IMR-90 (cell line): ENCODE measurements at regions of chr3 and their contacts with region 1.

Region 1: DNA sequence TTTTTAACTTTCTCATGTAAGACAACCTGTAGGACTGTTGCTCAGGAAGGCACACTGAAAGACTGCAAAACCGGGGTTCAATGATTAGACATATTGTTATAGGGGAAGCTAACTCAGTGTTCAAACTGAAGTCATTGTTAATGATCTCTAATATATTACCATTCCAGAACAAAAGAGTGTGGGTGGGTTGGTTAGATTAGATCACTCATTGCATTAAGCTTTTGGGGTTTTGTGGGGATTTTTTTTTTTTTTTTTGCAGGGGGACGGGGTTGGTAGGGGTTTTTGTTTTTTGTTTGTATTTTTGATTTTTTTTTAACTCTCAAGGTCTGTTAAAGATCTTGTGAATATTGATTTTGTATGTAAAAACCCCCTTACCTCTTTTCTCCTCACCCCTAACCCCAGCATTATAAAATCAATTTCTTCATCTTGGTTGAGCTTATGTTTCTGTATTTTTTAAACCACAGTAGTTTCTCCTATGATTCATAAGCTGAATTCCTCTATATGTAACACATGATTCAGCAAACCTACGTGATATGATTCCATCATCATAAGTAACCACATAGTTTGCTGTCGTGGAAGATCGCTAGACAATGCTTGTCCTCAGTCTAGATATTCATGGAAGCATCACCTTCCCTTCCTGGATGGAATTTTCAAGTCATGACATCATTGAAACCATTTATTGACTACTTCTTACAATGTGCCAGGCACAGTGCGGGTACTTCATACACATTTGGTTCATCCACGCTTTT is 544.1 kb upstream of the MDFIC2 start:
- DNase-seq: peak; percentile 99
- ATAC-seq: peak; percentile 52
- H3K4me3 ChIP-seq: no peak overlapping the region
- H3K27ac ChIP-seq: no peak overlapping the region
- H3K4me1 ChIP-seq: peaks cover 25% of the 10 kb centered on the region
- H3K27me3 ChIP-seq: no peaks in the 10 kb centered on the region
- CTCF ChIP-seq: no peak
- POLR2A ChIP-seq: no peak
- RAD21 ChIP-seq: no peak

Region 2: DNA sequence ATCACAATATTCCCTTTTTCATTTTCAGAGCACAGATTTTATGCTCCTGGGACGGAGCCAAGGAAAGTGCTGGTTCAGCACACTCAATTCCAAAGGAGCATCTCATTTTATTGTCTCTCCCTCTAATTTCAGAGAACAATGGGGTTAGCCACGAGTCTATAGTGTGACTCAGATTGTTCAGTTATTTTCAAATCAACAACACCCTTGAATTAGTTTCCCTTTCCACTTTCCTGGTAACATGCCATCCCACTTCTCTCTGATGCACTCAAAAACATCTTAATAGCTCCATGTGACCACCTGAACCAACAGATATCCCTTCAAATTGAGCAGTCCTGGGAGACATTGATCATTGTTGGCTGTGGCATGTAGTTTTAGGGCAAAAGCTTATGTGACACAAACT is 154.5 kb before region 1 on chr3:
- CTCF ChIA-PET with region 1: no interaction called
- POLR2A ChIA-PET with region 1: no interaction called
- dilution Hi-C with region 1: no loop called
- in situ Hi-C with region 1: no loop called
- intact Hi-C with region 1: no loop called
- DNase-seq: no peak
- ATAC-seq: no peak
- H3K4me3 ChIP-seq: no peak overlapping the region
- H3K27ac ChIP-seq: no peak overlapping the region
- H3K4me1 ChIP-seq: no peaks in the 10 kb centered on the region
- H3K27me3 ChIP-seq: peaks cover 11% of the 10 kb centered on the region
- CTCF ChIP-seq: no peak
- POLR2A ChIP-seq: no peak
- RAD21 ChIP-seq: no peak

Region 3: GRCh38 chr3:70951316-70951715 is 94.7 kb after region 1 on chr3:
- CTCF ChIA-PET with region 1: no interaction called
- POLR2A ChIA-PET with region 1: no interaction called
- dilution Hi-C with region 1: no loop called
- in situ Hi-C with region 1: no loop called
- intact Hi-C with region 1: loop called (anchors 5 kb)
- DNase-seq: no peak
- ATAC-seq: no peak
- H3K4me3 ChIP-seq: no peak overlapping the region
- H3K27ac ChIP-seq: no peak overlapping the region
- H3K4me1 ChIP-seq: no peaks in the 10 kb centered on the region; the same call in 1 of the 2 replicates
- H3K27me3 ChIP-seq: no peaks in the 10 kb centered on the region
- CTCF ChIP-seq: no peak
- POLR2A ChIP-seq: no peak
- RAD21 ChIP-seq: no peak

Region 4: GRCh38 chr3:71050538-71051258 is 194.1 kb after region 1 on chr3:
- CTCF ChIA-PET with region 1: no interaction called
- POLR2A ChIA-PET with region 1: no interaction called
- dilution Hi-C with region 1: no loop called
- in situ Hi-C with region 1: no loop called
- intact Hi-C with region 1: no loop called
- DNase-seq: peak; percentile 62
- ATAC-seq: peak; percentile 36
- H3K4me3 ChIP-seq: no peak overlapping the region
- H3K27ac ChIP-seq: peak overlapping the region; percentile 51; the same call in 1 of the 2 replicates
- H3K4me1 ChIP-seq: peaks cover 36% of the 10 kb centered on the region
- H3K27me3 ChIP-seq: no peaks in the 10 kb centered on the region
- CTCF ChIP-seq: no peak
- POLR2A ChIP-seq: no peak
- RAD21 ChIP-seq: no peak

Region 5: DNA sequence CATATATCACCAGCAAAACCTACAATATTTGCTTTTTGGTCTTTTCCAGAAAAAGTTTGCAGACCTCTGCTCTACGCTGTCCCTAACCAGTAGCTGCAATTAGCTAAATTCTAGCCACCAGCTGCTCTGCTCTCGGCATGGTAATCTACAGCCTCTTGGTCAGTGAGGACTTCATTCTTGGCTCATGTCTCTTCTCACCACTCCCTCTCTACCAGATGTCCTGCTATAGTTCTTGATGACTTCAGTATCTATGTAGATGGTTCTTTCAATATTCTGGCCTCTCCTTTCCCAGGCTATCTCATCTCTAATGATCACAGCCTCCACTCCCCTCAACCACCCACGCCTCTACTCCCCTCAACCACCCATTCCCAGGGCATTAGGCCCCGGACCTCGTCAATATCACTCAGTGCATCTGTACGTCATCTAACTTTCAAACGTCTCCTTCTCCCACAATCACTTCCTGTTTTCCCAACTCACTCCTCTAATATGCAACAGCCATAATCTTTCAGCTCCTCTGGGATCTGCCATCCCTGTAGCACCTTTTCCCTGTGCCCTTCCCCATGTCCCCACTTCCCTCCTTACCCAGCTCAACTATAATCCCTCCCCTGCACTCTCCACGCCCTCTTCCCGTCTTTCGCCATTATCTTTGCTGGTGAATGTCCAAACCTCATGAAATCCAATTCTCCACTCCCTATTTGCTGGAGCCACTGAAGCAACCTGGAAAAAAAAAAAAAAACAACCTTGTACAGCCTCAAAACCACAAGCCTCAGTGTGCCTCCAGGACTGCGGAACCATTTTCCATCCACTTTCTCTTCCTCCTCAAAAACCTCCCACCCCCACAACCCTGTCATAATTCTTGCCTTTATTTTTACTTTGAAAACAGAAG is 1357.7 kb after region 1 on chr3:
- CTCF ChIA-PET with region 1: no interaction called
- POLR2A ChIA-PET with region 1: no interaction called
- dilution Hi-C with region 1: no loop called
- in situ Hi-C with region 1: no loop called
- intact Hi-C with region 1: no loop called
- DNase-seq: no peak
- ATAC-seq: no peak
- H3K4me3 ChIP-seq: no peak overlapping the region
- H3K27ac ChIP-seq: no peak overlapping the region
- H3K4me1 ChIP-seq: no peaks in the 10 kb centered on the region
- H3K27me3 ChIP-seq: peaks cover 1% of the 10 kb centered on the region
- CTCF ChIP-seq: no peak
- POLR2A ChIP-seq: no peak
- RAD21 ChIP-seq: no peak